Transverse colon (tissue), 4 donors: ENCODE measurements at regions of chr11 and their contacts with region 1.

Region 1: GRCh38 chr11:111601979-111602864 is at the start of gene SIK2:
- DNase-seq: peak; percentile 95
- H3K4me3 ChIP-seq: peak within 1 kb of the TSS; percentile 73 to 85 (median 78)
- H3K27ac ChIP-seq: peak within 1 kb of the TSS; percentile 94 to 98 (median 97)
- H3K4me1 ChIP-seq: peaks cover 6 to 36% (median 17%) of the 10 kb centered on the region in 4 donors
- H3K27me3 ChIP-seq: no peaks in the 10 kb centered on the region
- CTCF ChIP-seq: peak; percentile 85 to 98 (median 92)
- EP300 ChIP-seq: no peak
- POLR2A ChIP-seq: peak; percentile 55
- total RNA-seq, gene SIK2: 6.6 to 19.1 (median 16.2) TPM

Region 2: DNA sequence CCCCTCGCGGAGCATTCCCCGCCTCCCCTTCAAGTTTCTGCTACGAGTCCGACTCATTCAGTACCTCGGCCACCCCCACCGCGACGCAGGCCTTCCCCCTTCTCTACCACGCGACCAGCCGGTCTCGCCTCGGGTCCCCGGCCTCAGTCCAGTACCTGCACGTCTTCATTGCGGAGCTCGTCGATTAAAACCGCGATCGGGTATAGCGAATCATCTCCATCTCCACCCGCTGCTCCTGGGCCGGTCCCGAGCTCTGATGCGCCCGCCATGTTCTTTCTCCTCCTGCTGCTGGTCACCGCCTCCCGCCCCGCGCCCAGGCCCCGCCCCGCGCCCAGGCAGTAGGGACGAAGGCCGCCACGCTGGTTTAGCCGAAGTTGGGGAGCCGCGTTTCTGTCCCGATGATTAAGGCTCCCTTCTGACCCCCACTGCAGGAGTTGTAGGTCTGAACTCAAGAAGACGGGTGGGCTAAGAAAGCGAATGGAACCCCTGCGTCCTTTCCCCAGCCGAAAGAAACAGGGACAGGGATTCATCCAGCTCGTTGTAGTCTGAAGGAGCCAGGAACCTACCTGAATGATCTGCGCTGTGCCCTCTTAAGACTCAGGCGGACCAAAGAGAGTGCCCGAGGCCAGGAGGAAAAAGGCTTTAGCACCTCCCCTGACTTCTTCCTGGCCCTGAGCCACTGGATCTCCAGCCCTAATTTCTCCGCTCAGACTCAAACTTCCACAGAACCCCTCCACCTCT is 164.0 kb after region 1 on chr11 and contains the start of gene PPP2R1B:
- in situ Hi-C with region 1: loop called in 2 of 4 experiments (anchors 10 kb)
- intact Hi-C with region 1: no loop called
- DNase-seq: peak; percentile 77
- H3K4me3 ChIP-seq: peak within 1 kb of the TSS; percentile 62 to 90 (median 79)
- H3K27ac ChIP-seq: peak within 1 kb of the TSS; percentile 89 to 94 (median 91)
- H3K4me1 ChIP-seq: peaks cover 14 to 30% (median 18%) of the 10 kb centered on the region in 4 donors
- H3K27me3 ChIP-seq: no peaks in the 10 kb centered on the region
- CTCF ChIP-seq: no peak
- EP300 ChIP-seq: no peak
- POLR2A ChIP-seq: peak; percentile 67
- total RNA-seq, gene PPP2R1B: 28.1 to 55.5 (median 41.5) TPM

Region 3: DNA sequence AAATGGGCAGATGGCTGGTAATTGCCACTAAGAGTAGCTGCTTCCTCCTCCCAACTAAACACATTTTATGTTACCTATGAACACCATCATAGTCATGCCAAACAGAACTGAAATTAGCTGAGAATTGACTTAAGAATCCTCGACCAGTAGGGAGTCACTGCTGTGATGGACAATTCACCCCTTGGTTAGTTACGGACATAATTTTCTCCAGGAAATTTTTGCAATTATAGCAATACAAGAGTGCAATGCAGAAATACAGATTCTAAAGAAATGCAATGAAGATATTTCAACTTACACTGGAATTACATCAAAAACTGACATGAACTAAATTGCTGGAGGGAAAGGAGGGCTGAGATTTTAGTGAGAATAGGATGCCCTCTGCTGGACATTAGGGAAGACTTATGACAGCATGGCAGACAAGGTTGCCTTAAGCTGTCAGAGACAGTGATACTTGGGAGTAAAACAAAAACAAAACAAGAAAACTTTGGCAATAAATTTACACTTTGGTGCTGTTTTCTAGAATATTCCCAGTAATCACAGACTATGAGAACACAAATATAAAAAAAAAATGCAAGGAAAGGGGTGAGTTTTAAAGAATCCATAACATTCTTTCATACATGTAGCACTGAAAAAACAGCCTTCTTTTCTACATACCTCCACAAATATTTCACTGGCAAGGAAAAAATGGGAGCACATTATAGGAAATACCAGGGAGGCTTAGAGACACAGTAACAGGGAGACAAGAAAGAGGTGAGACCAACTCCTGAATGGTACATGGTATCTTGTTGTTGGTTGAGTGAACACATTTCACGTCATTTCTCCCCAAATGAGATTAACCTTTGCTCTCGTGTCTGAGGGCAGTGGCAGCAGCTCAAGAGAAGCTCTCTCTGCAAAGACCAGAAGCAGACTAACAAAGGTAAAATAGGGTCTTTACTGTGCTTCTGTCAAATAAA is 175.1 kb after region 1 on chr11:
- in situ Hi-C with region 1: loop called in 2 of 4 experiments (anchors 5 to 10 kb)
- intact Hi-C with region 1: loop called (anchors 2 kb)
- DNase-seq: no peak
- H3K4me3 ChIP-seq: no peak overlapping the region
- H3K27ac ChIP-seq: peak overlapping the region in 1 of 4 donors; percentile 1
- H3K4me1 ChIP-seq: peaks cover 0 to 15% (median 4%) of the 10 kb centered on the region in 4 donors
- H3K27me3 ChIP-seq: no peaks in the 10 kb centered on the region
- CTCF ChIP-seq: peak; percentile 71 to 87 (median 76)
- EP300 ChIP-seq: no peak
- POLR2A ChIP-seq: no peak

Region 4: GRCh38 chr11:112086422-112087191 is 484.4 kb after region 1 on chr11 and contains the starts of genes SDHD and TIMM8B:
- in situ Hi-C with region 1: loop called in 1 of 4 experiments (anchors 25 kb)
- intact Hi-C with region 1: no loop called
- DNase-seq: peak; percentile 96
- H3K4me3 ChIP-seq: peak within 1 kb of the TSS; percentile 65 to 83 (median 74)
- H3K27ac ChIP-seq: peak within 1 kb of the TSS; percentile 80 to 84 (median 84)
- H3K4me1 ChIP-seq: peaks cover 22 to 36% (median 24%) of the 10 kb centered on the region in 4 donors
- H3K27me3 ChIP-seq: no peaks in the 10 kb centered on the region
- CTCF ChIP-seq: peak in 4 of 5 experiments; percentile 22 to 68 (median 36)
- EP300 ChIP-seq: no peak
- POLR2A ChIP-seq: peak; percentile 79
- total RNA-seq, gene SDHD: 30.3 to 268 (median 145) TPM
- total RNA-seq, gene TIMM8B: 26.2 to 58.9 (median 40.6) TPM